Cardiac septum (tissue), 1 donor: ENCODE measurements at regions of chr16 and their contacts with region 1.

Region 1: DNA sequence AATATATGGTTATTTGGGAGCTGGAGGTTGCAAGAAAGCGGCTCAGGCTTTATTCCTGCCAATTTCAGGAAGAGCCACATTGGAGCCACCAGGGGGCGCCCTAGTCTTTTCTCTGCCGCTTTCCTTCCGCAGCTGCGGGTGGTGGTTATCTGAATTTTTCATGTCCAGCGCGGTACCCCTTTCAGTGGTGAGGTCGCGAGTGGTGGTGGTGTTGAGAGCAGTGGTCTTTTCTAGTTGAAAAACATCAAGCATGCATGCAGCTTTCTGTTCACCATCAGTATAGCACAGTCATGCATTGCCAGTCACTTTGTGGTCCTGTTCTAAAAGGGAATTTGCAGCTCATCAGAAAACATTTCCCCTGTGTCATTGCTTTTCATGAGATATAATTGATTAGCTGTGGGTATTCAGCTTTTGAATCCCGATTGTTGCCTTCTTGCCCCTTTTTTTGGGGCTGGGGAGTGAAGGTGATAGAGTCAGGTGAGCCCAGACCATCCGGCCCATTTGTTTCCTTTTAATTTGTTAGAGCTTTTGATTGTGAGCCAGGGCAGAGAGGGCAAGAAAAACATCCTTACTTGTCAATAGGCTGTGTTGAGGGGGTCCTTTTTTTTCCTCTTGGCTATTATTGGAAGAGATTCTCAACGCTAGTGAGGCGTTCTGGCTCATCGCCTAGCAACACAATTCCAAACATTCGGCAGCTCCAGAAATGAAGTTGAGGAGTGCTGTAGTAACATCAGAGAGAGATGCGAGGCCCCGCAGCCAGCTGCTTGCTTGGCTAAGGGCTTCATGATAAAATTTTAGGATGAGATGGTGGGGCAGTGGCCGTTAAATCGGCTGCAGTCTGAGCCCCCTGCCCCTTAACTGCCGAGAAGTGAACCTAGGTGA is 119.0 kb downstream of the SNX29 start:
- DNase-seq: no peak

Region 2: DNA sequence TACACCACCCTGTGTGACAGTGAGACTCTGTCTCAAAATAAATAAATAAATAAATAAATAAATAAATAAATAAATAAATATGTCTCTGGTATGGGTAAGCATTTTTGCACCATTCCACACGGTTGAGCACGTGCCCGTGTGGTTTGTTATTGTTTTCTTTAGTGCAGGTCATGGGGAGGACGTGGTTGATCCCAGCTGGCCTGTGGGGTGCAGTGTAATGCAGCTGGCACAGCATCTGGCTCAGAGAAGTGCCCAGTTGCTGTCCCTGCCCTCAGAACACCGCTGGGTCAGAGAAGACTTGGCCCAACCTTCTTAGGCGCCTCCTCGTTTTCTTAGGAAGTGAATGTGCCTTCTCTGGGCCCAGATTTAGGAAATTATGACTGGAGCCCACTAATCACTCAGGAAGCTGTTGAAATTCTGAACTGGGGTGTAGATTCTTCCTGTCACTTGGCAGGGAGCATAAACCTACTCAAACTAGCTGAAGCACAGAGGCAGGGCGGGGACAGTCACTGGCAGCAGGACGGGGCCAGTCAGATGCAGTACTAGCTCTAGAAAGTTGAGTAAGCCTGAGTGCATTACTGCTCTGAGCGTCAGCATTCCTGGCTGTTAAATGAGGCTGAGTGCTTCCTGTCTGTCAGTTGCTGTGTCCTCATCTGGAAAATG is 33.0 kb before region 1 on chr16:
- intact Hi-C with region 1: no loop called
- DNase-seq: peak; percentile 75

Region 3: DNA sequence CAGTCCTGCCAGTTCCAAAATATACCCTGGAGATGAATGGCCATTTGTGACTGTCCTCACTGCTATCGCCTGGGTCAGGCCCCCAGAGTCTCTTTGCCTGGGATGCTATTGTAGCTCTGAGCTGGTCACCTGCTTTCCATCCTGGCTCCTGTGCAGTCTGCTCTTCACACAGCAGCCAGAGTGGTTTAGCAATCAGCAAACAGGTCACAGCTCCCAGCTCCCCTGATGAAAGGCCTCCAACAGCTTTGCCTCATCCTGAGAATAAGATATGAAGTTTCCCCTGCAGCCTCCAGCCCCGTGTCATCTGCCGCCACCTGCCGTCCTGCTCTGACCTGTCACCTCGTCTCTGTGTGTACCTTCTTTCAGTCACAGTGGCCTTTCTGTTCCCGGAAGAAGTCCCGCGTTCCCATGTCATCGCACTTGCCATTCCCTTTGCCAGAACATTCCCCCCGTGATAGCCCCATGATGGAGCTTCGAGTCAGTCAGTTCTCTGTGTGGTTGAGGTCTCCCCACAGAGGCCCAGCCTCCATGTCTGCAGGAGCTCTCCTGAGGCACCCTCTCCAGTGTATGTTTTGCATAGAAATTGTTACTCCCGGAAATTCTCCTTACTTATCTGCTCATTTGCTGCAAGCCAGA is 162.5 kb after region 1 on chr16:
- intact Hi-C with region 1: loop called (anchors 10 kb)
- DNase-seq: no peak

Region 4: GRCh38 chr16:12271006-12271405 is 175.5 kb after region 1 on chr16:
- intact Hi-C with region 1: loop called (anchors 5 kb)
- DNase-seq: no peak

Region 5: GRCh38 chr16:12819126-12820117 is 723.9 kb after region 1 on chr16:
- intact Hi-C with region 1: loop called (anchors 10 kb)
- DNase-seq: peak; percentile 90